ENCODE measurements at regions of chr9 and their contacts with region 1.

Region 1: DNA sequence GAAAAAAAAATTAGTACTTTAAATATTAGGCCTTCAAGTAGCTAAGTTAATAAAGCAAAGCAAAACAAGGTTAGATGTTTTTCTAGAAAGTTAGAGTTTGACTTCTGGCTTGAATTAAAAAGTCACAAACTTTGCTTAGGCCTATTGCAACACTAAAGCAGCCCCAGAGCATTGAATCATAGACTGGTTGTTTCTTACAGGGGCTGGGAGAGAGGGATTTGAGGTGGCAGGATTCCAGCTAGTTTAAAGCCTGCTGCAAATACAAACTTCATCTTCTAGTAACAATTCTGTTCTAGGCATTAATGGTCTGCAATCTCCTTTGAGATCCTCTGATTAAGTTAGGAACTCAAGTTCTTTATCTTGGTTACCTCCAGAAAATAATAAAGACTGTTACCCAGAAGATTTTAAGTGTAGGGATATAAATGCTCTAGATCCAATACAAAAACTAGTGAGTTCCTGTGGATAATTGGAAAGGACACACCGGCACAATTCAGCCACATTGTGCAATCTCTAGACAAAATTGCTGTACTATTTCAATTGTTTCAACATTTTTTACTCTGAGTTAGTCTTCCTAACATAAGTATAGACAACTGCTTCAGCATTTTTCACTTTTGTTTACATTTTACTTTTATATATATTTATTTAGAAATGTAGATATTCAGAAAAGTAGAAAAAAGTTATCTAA is 12.6 kb downstream of the OR13C5 start:
- DNase-seq: no peak
- H3K4me3 ChIP-seq: no peak overlapping the region
- H3K27ac ChIP-seq: no peak overlapping the region
- H3K4me1 ChIP-seq: no peaks in the 10 kb centered on the region
- CTCF ChIP-seq: no peak

Region 2: GRCh38 chr9:104417296-104417695 is 169.3 kb before region 1 on chr9:
- CTCF ChIA-PET with region 1: no interaction called
- POLR2A ChIA-PET with region 1: no interaction called
- intact Hi-C with region 1: no loop called
- DNase-seq: no peak
- H3K4me3 ChIP-seq: no peak overlapping the region
- H3K27ac ChIP-seq: no peak overlapping the region
- H3K4me1 ChIP-seq: no peaks in the 10 kb centered on the region
- CTCF ChIP-seq: no peak

Region 3: GRCh38 chr9:104633976-104634520 is 47.4 kb after region 1 on chr9:
- CTCF ChIA-PET with region 1: no interaction called
- POLR2A ChIA-PET with region 1: no interaction called
- intact Hi-C with region 1: loop called (anchors 1 kb)
- DNase-seq: no peak
- H3K4me3 ChIP-seq: no peak overlapping the region
- H3K27ac ChIP-seq: no peak overlapping the region
- H3K4me1 ChIP-seq: no peaks in the 10 kb centered on the region
- CTCF ChIP-seq: no peak

Region 4: GRCh38 chr9:104914466-104914865 is 327.8 kb after region 1 on chr9:
- CTCF ChIA-PET with region 1: no interaction called
- POLR2A ChIA-PET with region 1: no interaction called
- intact Hi-C with region 1: no loop called
- DNase-seq: no peak
- H3K4me3 ChIP-seq: no peak overlapping the region
- H3K27ac ChIP-seq: peak overlapping the region; percentile 20
- H3K4me1 ChIP-seq: peaks cover 93% of the 10 kb centered on the region
- CTCF ChIP-seq: no peak

Measured in OCI-LY7 (cell line).